H1 (cell line): ENCODE measurements at regions of chr7 and their contacts with region 1.

Region 1: GRCh38 chr7:76234931-76235441 is 33.3 kb downstream of the SRRM3 start:
- DNase-seq: peak; percentile 79 to 99
- H3K4me3 ChIP-seq: peak overlapping the region; percentile 38 to 67 (median 47)
- H3K27ac ChIP-seq: peak overlapping the region; percentile 37; the same call in 1 of the 2 replicates
- H3K4me1 ChIP-seq: peaks cover 6 to 41% (median 27%) of the 10 kb centered on the region in 4 experiments
- H3K27me3 ChIP-seq: no peaks in the 10 kb centered on the region; a peak in 1 of 7 replicates
- CTCF ChIP-seq: peak in 1 of 3 experiments; percentile 11; a peak in 1 of 4 replicates
- EP300 ChIP-seq: no peak
- POLR2A ChIP-seq: 0 out of 3 replicates have a peak, but pooled peaks of 1 of the 2 experiments have one; percentile 20
- RAD21 ChIP-seq: no peak

Region 2: GRCh38 chr7:76166404-76167255 is 68.4 kb before region 1 on chr7:
- CTCF ChIA-PET with region 1: interaction called, 4 read pairs
- POLR2A ChIA-PET with region 1: interaction called, 11 read pairs
- DNase-seq: peak; percentile 87 to 99
- H3K4me3 ChIP-seq: peak overlapping the region; percentile 54 to 69 (median 56)
- H3K27ac ChIP-seq: peak overlapping the region; percentile 87
- H3K4me1 ChIP-seq: peaks cover 2 to 17% (median 9%) of the 10 kb centered on the region in 4 experiments
- H3K27me3 ChIP-seq: no peaks in the 10 kb centered on the region
- CTCF ChIP-seq: no peak
- EP300 ChIP-seq: peak in 1 of 2 experiments; percentile 68; a peak in 1 of 3 replicates
- POLR2A ChIP-seq: peak; percentile 49 to 86
- RAD21 ChIP-seq: peak in 1 of 2 experiments; percentile 14; a peak in 2 of 4 replicates

Region 3: DNA sequence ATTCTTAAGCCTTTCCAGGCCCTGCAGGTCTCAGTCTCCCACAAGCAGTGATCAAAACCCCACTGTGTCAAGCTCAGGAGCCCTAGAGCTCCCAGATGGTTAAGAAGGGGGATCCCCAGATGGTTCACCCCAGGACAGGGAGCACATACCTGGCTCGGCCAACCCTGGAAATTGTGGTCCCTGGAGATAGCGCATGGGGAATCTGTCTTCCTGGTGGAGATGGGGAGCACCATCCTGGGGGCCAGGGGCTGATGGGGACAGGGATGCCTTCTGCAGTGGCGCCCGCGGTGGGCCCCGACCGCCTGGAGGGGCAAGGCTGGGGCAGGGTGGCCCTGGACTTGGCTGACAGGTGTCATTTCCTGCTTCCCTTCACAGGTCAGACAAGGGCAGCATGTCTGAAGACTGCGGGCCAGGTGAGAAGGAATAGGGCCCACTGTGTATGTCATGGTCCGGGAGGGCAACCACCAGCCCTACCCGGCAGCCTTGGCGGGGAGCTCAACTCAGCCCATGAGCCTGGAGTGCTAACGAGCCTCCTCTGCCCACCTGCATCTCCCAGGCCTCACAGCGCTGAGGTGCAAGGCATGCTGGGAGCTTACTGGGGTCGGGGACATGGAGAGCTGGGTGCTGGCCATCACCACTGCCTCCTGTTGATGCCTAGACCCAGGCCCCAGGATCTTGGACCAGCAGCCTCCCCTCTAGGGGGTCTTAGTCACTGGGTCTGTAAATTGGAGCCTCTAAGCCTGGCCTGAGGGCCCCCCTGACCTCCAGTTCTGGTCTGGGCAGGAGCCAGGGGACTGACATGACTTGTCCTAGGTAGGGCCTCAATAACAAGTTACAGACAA is 61.4 kb before region 1 on chr7:
- CTCF ChIA-PET with region 1: interaction called, 24 read pairs
- POLR2A ChIA-PET with region 1: interaction called, 8 read pairs
- DNase-seq: no peak
- H3K4me3 ChIP-seq: no peak overlapping the region
- H3K27ac ChIP-seq: no peak overlapping the region
- H3K4me1 ChIP-seq: peaks cover 0 to 3% (median 1%) of the 10 kb centered on the region in 4 experiments; a peak in 3 of 7 replicates
- H3K27me3 ChIP-seq: no peaks in the 10 kb centered on the region
- CTCF ChIP-seq: no peak
- EP300 ChIP-seq: no peak
- POLR2A ChIP-seq: no peak
- RAD21 ChIP-seq: no peak

Region 4: DNA sequence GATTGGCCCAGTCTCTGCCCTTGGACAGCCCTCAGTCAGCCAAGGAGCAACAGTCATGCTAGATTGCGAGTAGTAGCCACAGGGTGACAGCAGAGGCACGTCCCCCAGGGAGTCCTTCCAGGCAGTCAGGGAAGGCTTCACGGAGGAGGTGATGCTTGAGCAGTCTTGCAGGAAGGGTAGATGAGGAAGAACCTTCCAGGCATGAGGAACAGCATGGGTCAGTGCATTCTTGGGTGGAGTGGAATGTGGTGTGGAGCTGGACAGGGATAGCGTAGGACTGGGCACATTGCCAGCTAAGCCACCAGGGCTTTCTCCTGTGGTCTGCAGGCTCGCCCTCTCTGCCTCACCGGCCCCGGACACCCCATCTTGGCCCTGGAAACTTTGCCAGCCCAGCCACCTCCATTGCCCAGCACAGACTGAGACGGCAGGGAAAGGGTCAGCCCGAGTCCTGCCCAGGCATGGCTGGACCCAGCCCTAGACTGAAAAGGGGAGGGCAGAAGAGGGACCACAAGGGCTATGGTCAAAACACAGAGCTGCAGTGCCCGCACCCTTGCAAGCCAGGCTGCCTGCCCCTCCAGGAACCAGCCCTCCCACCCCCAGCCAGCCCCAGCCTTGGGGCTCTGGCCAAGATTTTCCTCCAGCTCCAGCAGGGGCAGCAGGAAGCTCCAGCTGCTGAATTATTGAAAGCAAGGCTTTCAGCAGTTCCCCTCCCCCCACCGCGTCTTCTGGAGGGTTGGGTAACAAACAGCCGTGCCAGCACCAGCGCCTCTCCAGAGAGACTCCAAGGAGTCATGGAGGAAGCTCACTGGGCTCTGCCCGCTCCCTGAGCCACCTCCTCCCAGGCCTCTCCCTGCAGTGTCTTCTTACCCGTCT is 14.6 kb before region 1 on chr7:
- CTCF ChIA-PET with region 1: interaction called, 41 read pairs
- POLR2A ChIA-PET with region 1: interaction called, 41 read pairs
- DNase-seq: peak; percentile 62 to 84
- H3K4me3 ChIP-seq: peak overlapping the region in 1 of 4 experiments; percentile 10; a peak in 2 of 8 replicates
- H3K27ac ChIP-seq: peak overlapping the region; percentile 64; the same call in 1 of the 2 replicates
- H3K4me1 ChIP-seq: peaks cover 19 to 45% (median 22%) of the 10 kb centered on the region in 4 experiments
- H3K27me3 ChIP-seq: no peaks in the 10 kb centered on the region
- CTCF ChIP-seq: peak; percentile 31 to 50 (median 49); a peak in 3 of 4 replicates
- EP300 ChIP-seq: peak in 1 of 2 experiments; percentile 20; a peak in 1 of 3 replicates
- POLR2A ChIP-seq: peak in 1 of 2 experiments; percentile 49; a peak in 1 of 3 replicates
- RAD21 ChIP-seq: peak; percentile 53 to 68

Region 5: DNA sequence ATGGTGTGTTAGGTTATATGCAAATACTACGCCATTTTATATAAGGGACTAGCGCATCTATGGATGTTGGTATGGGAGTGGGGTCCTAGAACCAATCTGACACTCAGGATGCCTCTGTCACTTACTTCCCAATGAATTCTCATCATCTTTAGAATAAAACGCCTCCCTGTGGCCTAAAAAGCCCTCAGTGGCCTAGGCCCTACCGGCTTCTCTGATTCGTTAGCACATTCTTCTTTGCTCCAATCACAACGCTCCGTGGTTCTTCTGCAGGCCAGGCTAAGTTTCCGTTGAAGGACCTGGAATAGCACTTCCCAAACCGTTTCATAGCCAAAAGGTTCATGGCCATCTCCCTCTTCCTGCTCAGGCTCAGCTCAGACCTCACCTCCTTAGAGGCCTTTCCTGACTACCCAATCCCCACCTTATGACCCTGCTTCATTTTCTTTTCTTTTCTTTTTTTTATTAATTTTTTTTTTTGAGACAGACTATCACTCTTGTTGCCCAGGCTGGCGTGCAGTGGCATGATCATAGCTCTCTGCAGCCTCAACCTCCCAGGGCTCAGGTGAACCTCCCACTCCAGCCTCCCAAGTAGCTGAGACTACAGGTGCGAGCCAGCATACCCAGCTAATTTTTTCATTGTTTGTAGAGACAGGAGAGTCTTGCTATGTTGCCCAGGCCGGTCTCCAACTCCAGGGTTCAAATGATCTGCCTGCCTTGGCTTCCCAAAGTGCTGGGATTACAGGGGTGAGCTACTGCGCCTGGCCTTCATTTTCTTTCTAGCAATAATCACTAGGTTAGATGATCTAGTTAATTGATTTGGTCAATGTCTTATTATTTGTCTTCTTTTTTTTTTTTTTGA is 148.3 kb after region 1 on chr7:
- CTCF ChIA-PET with region 1: no interaction called
- POLR2A ChIA-PET with region 1: no interaction called
- DNase-seq: peak in 1 of 2 experiments; percentile 63
- H3K4me3 ChIP-seq: no peak overlapping the region
- H3K27ac ChIP-seq: no peak overlapping the region
- H3K4me1 ChIP-seq: no peaks in the 10 kb centered on the region
- H3K27me3 ChIP-seq: no peaks in the 10 kb centered on the region
- CTCF ChIP-seq: peak in 2 of 3 experiments; percentile 3 to 39; a peak in 1 of 4 replicates
- EP300 ChIP-seq: no peak
- POLR2A ChIP-seq: no peak
- RAD21 ChIP-seq: no peak; a peak in 1 of 4 replicates